CD4-positive, alpha-beta memory T cell (primary cell): ENCODE measurements at regions of chr9 and their contacts with region 1.

Region 1: DNA sequence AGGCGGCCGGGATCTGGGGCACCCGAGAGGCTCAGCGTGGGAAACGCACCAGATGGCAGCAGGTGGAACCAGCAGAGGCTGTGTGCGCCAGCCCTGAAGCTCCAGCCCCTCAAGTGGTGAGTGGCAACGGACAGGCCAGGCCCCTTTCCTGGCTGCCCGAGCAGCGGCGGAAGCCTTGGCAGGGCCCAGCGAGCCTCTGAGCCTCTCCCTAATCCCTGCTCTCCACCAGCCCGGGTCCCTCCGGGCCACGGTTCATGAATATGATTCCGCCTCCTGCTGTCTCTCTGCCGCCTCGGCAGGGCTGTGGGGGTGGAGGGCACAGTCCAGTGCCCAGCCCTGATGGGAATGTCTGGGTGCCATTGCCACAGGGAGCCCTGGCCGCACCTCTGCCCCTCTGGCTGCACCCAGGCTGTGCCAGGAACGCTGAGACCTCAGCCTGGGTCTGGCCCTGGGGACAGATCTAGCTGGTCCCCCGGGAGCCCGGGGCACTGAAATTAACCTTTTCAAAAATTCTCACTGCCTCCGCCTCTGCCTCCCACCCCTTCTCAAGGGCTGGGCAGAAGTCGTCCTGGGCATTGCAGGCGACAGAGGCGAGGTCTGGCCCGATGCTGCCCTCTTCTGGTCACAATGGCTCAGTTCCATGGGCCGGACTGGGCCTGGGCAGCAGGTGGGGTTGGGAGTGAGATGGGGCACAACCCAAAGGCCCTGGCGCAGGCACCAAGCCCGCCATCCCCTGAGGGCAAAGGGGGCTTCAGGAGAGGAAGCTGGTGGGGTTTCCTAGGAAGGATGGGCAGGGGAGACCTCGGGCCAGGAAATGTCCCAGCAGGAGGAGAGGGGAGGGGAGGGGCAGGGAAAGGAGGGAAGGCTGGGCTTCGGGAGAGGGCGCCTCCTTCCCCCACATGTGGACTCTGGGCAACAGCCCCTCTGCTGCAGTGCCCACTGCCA is 20.3 kb downstream of the CCDC187 start:
- DNase-seq: peak; percentile 55 to 68 (median 60)
- H3K4me3 ChIP-seq: no peak overlapping the region
- H3K4me3 Mint-ChIP-seq: peak overlapping the region in 1 of 8 donors; percentile 57
- H3K27ac ChIP-seq: no peak overlapping the region
- H3K27ac Mint-ChIP-seq: no peak overlapping the region
- H3K4me1 ChIP-seq: peaks cover 6% of the 10 kb centered on the region
- H3K4me1 Mint-ChIP-seq: peaks cover 0 to 4% (median 3%) of the 10 kb centered on the region in 4 donors
- H3K27me3 ChIP-seq: no peaks in the 10 kb centered on the region
- H3K27me3 Mint-ChIP-seq: peaks cover 4 to 10% of the 10 kb centered on the region in 2 donors

Region 2: GRCh38 chr9:135602789-135603481 is 680.6 kb before region 1 on chr9:
- CTCF ChIA-PET with region 1: no interaction called
- POLR2A ChIA-PET with region 1: no interaction called
- intact Hi-C with region 1: loop called (anchors 10 kb)
- DNase-seq: peak; percentile 35 to 44 (median 37)
- H3K4me3 ChIP-seq: no peak overlapping the region
- H3K4me3 Mint-ChIP-seq: no peak overlapping the region
- H3K27ac ChIP-seq: no peak overlapping the region
- H3K27ac Mint-ChIP-seq: no peak overlapping the region
- H3K4me1 ChIP-seq: no peaks in the 10 kb centered on the region
- H3K4me1 Mint-ChIP-seq: peaks cover 0 to 2% (median 0%) of the 10 kb centered on the region in 4 donors
- H3K27me3 ChIP-seq: peaks cover 1% of the 10 kb centered on the region
- H3K27me3 Mint-ChIP-seq: peaks cover 6 to 9% of the 10 kb centered on the region in 2 donors

Region 3: DNA sequence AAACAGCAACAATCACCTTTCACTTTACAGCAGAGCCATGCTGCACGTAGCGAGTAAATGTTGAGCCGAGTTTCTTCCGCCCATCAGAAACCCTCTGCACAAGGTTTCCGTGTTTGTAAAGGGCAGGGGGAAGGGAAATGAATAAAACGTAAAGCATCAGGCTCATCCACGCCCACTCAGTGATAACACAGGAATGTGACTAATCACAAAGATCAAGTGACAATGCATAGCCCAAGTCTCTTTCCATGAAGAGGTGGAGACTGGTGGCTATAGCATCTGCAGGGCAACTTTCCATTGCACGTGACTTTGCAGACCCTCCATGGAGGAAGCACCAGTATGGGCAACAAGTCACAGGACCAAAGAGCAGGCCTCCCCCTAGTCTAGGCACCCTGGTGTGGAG is 432.8 kb before region 1 on chr9:
- CTCF ChIA-PET with region 1: no interaction called
- POLR2A ChIA-PET with region 1: no interaction called
- intact Hi-C with region 1: no loop called
- DNase-seq: no peak
- H3K4me3 ChIP-seq: no peak overlapping the region
- H3K4me3 Mint-ChIP-seq: no peak overlapping the region
- H3K27ac ChIP-seq: no peak overlapping the region
- H3K27ac Mint-ChIP-seq: peak overlapping the region in 5 of 7 donors; percentile 60 to 77 (median 64)
- H3K4me1 ChIP-seq: no peaks in the 10 kb centered on the region
- H3K4me1 Mint-ChIP-seq: peaks cover 3 to 15% (median 7%) of the 10 kb centered on the region in 4 donors
- H3K27me3 ChIP-seq: no peaks in the 10 kb centered on the region
- H3K27me3 Mint-ChIP-seq: no peaks in the 10 kb centered on the region

Region 4: DNA sequence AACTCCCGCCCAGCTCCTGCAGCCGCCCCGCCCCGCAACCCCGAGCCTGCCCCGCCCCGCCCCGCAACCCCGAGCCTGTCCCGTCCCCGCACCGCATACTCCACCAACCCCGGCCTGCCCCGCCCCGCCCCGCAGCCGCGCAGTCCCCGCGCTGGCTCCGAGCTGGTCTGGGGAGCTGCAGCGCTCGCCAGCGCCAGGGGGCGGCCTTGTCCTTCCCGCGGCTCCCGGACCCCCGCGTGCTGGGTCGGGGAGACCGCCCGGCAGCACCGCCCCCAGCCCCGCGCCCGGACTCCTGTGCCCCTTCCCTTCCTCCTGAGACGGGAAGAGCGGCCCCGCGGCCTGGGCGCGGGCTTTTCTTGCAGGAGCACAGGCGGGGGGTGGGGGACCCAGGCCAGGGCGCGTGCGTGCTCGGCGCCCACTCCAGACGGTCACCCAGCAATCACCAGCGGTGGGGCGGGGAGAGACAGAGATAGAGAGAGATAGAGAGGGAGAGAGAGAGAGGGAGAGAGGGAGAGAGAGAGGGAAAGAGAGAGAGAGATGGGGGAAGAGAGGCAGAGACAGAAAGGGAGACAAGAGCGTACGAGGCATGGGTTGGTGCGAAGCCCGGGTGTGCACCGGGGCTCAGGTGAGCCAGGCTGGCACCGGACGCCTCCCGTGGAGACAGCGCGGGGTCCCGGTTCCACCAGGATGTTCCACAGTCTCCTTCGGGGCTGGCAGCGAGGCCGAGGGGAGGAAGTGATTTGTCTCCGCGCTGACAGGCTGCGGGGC is 150.2 kb before region 1 on chr9:
- CTCF ChIA-PET with region 1: interaction called, 3 read pairs
- POLR2A ChIA-PET with region 1: no interaction called
- intact Hi-C with region 1: loop called (anchors 2 kb)
- DNase-seq: peak in 1 of 5 donors; percentile 14
- H3K4me3 ChIP-seq: no peak overlapping the region
- H3K4me3 Mint-ChIP-seq: peak overlapping the region in 6 of 8 donors; percentile 32 to 77 (median 54)
- H3K27ac ChIP-seq: no peak overlapping the region
- H3K27ac Mint-ChIP-seq: no peak overlapping the region
- H3K4me1 ChIP-seq: peaks cover 7% of the 10 kb centered on the region
- H3K4me1 Mint-ChIP-seq: peaks cover 2 to 10% (median 7%) of the 10 kb centered on the region in 4 donors
- H3K27me3 ChIP-seq: peaks cover 4% of the 10 kb centered on the region
- H3K27me3 Mint-ChIP-seq: peaks cover 14 to 25% of the 10 kb centered on the region in 2 donors

Region 5: DNA sequence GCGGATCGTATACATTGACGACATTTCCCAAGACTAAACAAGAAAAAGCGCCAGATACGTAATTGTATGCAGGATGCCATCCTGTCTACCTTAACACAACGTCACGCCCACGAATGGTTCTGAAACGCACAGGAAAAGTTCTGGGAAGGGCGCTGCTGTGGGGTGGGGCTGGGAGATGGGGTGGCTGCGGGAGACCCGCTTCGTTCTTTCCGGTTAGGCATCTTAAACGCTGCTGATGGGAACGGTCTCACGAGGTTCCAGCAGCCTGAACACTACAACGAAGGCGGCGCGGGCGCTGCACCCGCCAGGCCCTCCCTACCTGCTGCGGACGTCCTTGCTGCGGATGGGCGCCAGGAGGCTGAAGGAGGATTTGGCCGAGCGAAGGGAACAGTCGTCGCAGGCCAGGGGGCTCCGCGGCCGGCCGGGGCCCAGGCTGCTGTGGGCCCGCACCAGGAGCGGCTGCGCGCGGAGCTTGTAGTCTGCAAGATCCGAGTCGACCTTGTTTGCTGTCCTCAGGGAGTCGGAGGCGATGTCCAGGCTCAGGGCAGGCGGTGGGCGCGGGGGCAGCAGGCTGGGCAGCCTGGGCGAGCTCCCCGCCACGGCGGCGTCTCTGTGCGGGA is 154.8 kb after region 1 on chr9:
- CTCF ChIA-PET with region 1: no interaction called
- POLR2A ChIA-PET with region 1: no interaction called
- intact Hi-C with region 1: no loop called
- DNase-seq: peak; percentile 16 to 67 (median 24)
- H3K4me3 ChIP-seq: peak overlapping the region in 1 of 2 donors; percentile 66
- H3K4me3 Mint-ChIP-seq: peak overlapping the region; percentile 86 to 91 (median 88)
- H3K27ac ChIP-seq: peak overlapping the region; percentile 74
- H3K27ac Mint-ChIP-seq: peak overlapping the region; percentile 87 to 95 (median 93)
- H3K4me1 ChIP-seq: peaks cover 29% of the 10 kb centered on the region
- H3K4me1 Mint-ChIP-seq: peaks cover 16 to 36% (median 23%) of the 10 kb centered on the region in 4 donors
- H3K27me3 ChIP-seq: no peaks in the 10 kb centered on the region
- H3K27me3 Mint-ChIP-seq: no peaks in the 10 kb centered on the region